Naive thymus-derived CD4-positive, alpha-beta T cell (primary cell): ENCODE measurements at regions of chr7 and their contacts with region 1.

Region 1: GRCh38 chr7:79361214-79361613 is 92.3 kb downstream of the MAGI2 start:
- DNase-seq: no peak
- ATAC-seq: no peak
- H3K4me3 ChIP-seq: no peak overlapping the region
- H3K4me3 Mint-ChIP-seq: no peak overlapping the region
- H3K27ac ChIP-seq: no peak overlapping the region
- H3K27ac Mint-ChIP-seq: no peak overlapping the region
- H3K4me1 ChIP-seq: no peaks in the 10 kb centered on the region
- H3K4me1 Mint-ChIP-seq: no peaks in the 10 kb centered on the region
- H3K27me3 ChIP-seq: no peaks in the 10 kb centered on the region
- H3K27me3 Mint-ChIP-seq: no peaks in the 10 kb centered on the region

Region 2: GRCh38 chr7:79434867-79435266 is 73.7 kb after region 1 on chr7:
- CTCF ChIA-PET with region 1: no interaction called
- POLR2A ChIA-PET with region 1: no interaction called
- intact Hi-C with region 1: loop called in 1 of 2 experiments (anchors 5 kb)
- DNase-seq: no peak
- ATAC-seq: no peak
- H3K4me3 ChIP-seq: no peak overlapping the region
- H3K4me3 Mint-ChIP-seq: no peak overlapping the region
- H3K27ac ChIP-seq: no peak overlapping the region
- H3K27ac Mint-ChIP-seq: no peak overlapping the region
- H3K4me1 ChIP-seq: no peaks in the 10 kb centered on the region
- H3K4me1 Mint-ChIP-seq: no peaks in the 10 kb centered on the region
- H3K27me3 ChIP-seq: no peaks in the 10 kb centered on the region
- H3K27me3 Mint-ChIP-seq: no peaks in the 10 kb centered on the region